ENCODE measurements at regions of chr1 and their contacts with region 1.

Region 1: GRCh38 chr1:25037174-25038074 is 107.3 kb upstream of the RUNX3 start:
- DNase-seq: peak; percentile 62
- H3K4me3 Mint-ChIP-seq: no peak overlapping the region
- H3K27ac Mint-ChIP-seq: no peak overlapping the region
- H3K4me1 Mint-ChIP-seq: peaks cover 5% of the 10 kb centered on the region
- H3K27me3 Mint-ChIP-seq: peaks cover 23% of the 10 kb centered on the region
- CTCF ChIP-seq: peak; percentile 57

Region 2: GRCh38 chr1:24847995-24848881 is 189.2 kb before region 1 on chr1:
- CTCF ChIA-PET with region 1: interaction called, 10 read pairs
- POLR2A ChIA-PET with region 1: no interaction called
- intact Hi-C with region 1: loop called (anchors 2 kb)
- DNase-seq: peak; percentile 63
- H3K4me3 Mint-ChIP-seq: peak overlapping the region; percentile 53
- H3K27ac Mint-ChIP-seq: no peak overlapping the region
- H3K4me1 Mint-ChIP-seq: no peaks in the 10 kb centered on the region
- H3K27me3 Mint-ChIP-seq: no peaks in the 10 kb centered on the region
- CTCF ChIP-seq: peak; percentile 89

Region 3: DNA sequence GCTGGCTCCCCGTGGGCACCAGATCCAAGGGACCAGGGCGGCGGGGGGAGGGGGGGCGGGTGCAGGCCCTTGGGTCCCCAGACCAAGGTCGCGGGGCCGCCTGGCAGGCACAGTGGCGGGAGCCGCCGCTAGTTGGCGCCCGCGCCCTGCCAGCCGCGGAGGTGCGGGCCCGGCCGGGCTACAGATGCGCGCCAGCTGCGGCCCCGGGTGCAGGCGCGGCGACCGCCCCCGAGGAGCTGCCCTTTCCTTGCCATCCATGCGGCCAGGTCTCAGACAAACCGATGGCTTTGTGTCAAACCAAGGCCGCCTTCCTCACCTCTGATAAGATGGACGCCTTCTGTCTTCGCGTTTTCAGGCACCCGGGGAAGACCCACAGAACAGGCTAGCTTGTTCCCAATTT is 105.1 kb before region 1 on chr1:
- CTCF ChIA-PET with region 1: interaction called, 6 read pairs
- POLR2A ChIA-PET with region 1: no interaction called
- intact Hi-C with region 1: loop called (anchors 1 kb)
- DNase-seq: peak; percentile 23
- H3K4me3 Mint-ChIP-seq: no peak overlapping the region
- H3K27ac Mint-ChIP-seq: no peak overlapping the region
- H3K4me1 Mint-ChIP-seq: no peaks in the 10 kb centered on the region
- H3K27me3 Mint-ChIP-seq: peaks cover 15% of the 10 kb centered on the region
- CTCF ChIP-seq: peak; percentile 76

Region 4: GRCh38 chr1:25099343-25099951 is 62.0 kb after region 1 on chr1:
- CTCF ChIA-PET with region 1: interaction called, 10 read pairs
- POLR2A ChIA-PET with region 1: no interaction called
- intact Hi-C with region 1: loop called (anchors 2 kb)
- DNase-seq: no peak
- H3K4me3 Mint-ChIP-seq: no peak overlapping the region
- H3K27ac Mint-ChIP-seq: no peak overlapping the region
- H3K4me1 Mint-ChIP-seq: no peaks in the 10 kb centered on the region
- H3K27me3 Mint-ChIP-seq: peaks cover 36% of the 10 kb centered on the region
- CTCF ChIP-seq: no peak